ENCODE measurements at regions of chr16 and their contacts with region 1.

Region 1: GRCh38 chr16:67480833-67481560 is at the start of gene ATP6V0D1:
- DNase-seq: peak; percentile 99
- ATAC-seq: peak; percentile 92
- H3K4me3 Mint-ChIP-seq: peak within 1 kb of the TSS; percentile 93
- H3K27ac Mint-ChIP-seq: peak within 1 kb of the TSS; percentile 99
- H3K4me1 Mint-ChIP-seq: peaks cover 30% of the 10 kb centered on the region
- H3K27me3 Mint-ChIP-seq: no peaks in the 10 kb centered on the region
- CTCF ChIP-seq: peak; percentile 75
- total RNA-seq, gene ATP6V0D1: 17.5 to 18.2 TPM

Region 2: DNA sequence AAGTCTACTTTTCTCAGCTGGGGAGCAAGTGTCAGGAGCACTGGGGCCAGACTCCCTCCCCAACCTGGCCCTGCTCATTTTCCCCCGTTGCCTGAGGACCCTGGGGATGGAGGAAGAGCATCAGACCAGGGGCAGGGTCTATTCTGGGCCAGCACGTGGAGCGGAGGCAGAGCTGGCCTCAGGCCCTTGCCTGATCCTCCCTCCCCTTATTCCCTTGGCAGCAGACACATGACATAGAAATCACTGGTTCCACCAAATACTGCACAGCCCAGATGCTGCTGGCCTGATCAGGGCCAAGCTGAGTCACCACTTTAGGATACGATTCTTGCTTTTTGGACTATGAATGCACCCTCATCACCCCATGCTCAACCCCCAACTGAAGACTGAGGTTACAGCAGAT is 18.1 kb after region 1 on chr16:
- CTCF ChIA-PET with region 1: interaction called, 17 read pairs
- POLR2A ChIA-PET with region 1: no interaction called
- intact Hi-C with region 1: no loop called
- DNase-seq: no peak
- ATAC-seq: no peak
- H3K4me3 Mint-ChIP-seq: no peak overlapping the region
- H3K27ac Mint-ChIP-seq: no peak overlapping the region
- H3K4me1 Mint-ChIP-seq: peaks cover 10% of the 10 kb centered on the region
- H3K27me3 Mint-ChIP-seq: no peaks in the 10 kb centered on the region
- CTCF ChIP-seq: no peak

Region 3: DNA sequence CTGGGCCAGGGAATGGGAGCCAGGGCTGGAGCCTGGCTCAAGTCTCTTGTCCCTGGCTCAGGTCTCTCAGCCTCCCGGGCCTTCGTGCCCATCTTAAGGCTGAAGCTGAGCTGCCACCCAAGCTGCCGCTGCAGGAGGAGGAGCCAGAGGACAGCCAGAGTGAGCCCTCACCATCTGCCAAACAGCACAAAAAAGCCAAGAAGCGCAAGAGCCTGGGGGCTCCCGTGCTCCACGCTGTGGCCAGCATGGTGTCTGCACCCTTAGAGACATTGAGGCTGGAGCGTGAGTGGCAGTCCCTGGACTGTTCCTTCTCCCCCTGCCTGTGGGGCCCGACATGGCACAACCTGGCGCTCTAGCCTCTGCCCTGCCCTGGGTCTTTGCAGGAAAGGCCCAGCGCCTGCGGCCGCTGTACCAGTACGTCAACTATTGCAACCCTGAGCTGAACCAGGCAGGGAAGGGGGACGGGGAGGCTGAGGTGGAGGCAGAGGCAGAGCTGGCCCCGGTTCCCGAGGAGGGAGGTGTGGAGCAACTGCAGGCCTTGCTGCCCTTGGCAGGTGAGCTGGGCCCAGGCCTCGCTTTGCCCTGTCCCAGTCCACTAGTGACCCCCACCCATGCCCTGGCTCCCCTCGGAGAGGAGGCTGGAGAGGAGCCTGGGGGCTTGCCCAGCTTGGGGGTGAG is 187.0 kb after region 1 on chr16:
- CTCF ChIA-PET with region 1: interaction called, 17 read pairs
- POLR2A ChIA-PET with region 1: interaction called, 3 read pairs
- intact Hi-C with region 1: no loop called
- DNase-seq: peak; percentile 92
- ATAC-seq: peak; percentile 92
- H3K4me3 Mint-ChIP-seq: peak overlapping the region; percentile 80
- H3K27ac Mint-ChIP-seq: no peak overlapping the region
- H3K4me1 Mint-ChIP-seq: peaks cover 11% of the 10 kb centered on the region
- H3K27me3 Mint-ChIP-seq: no peaks in the 10 kb centered on the region
- CTCF ChIP-seq: peak; percentile 73